ENCODE measurements at regions of chr3 and their contacts with region 1.

Region 1: DNA sequence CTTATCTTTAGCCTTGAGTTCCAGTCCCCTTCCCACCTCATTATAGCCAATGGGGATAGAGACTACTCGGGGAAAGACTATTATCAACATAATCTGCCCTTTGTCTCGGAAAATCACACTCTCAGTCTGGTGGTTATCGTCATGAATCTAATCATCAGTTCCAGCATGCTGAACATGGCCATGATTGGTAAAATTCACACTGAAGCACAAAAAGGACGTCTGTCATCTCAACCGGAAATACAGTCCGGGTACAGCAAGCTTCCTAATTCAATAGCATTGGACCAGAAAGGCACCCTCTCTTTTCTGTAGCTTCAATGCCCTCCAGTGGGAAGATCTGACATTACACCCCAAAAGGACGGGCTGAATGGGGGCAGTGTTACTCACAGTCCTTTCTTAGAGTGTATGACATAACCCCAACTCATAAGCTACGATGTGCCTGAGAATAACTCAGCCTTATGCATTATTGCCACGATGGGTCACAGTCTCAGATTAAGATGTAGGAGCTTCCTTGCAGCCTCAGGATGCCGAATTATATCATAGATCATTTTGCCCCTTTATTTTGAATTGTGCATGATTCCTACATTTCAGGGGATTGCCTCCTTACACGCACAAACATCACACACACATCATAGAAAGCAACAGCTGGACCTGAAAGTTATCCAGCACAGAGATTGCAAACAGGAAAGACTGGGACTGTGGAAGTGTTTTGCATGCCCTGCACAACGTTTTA is 390.4 kb upstream of the LMCD1 start:
- DNase-seq: no peak
- ATAC-seq: peak; percentile 97

Region 2: DNA sequence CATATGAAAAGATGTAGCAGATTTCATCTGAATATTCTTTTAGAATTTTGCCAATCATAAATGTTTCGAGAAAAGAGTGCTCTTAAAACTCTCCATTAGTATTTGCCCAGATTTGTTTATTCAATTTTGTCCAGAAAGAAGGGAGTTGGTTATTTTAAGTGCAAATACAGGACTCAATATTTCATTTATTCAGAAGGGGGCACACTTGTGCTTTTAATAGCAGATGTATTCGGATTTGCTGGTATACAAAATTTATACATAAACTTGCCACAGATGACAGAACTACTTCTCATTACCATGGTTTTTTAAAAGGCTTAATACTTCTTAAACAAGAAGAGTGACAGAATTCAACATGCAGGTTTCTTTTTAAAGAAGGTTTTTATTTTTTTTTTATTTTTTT is 1320.1 kb before region 1 on chr3:
- intact Hi-C with region 1: loop called (anchors 5 kb)
- DNase-seq: no peak
- ATAC-seq: no peak

Region 3: DNA sequence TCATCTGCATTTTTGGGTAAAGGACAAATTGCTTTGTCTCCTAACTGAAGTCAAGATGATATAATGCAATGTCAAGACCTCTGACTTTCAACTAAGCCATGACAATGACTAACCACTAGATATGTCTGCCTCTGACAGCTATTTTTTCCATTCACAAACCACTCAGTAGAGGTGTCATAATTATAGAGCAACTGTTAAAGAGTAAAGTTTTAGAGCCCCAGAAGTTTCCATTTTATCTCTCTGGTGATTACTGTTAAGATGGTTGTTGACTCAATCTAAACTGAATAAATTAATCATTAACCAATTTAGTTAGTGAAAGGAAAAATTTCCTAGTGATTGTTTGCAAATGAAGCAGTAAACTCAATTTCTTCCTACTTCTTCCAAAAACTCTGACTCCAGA is 470.4 kb before region 1 on chr3:
- intact Hi-C with region 1: no loop called
- DNase-seq: no peak
- ATAC-seq: no peak

Region 4: GRCh38 chr3:7800006-7800780 is 311.0 kb before region 1 on chr3:
- intact Hi-C with region 1: loop called (anchors 10 kb)
- DNase-seq: no peak
- ATAC-seq: no peak

Region 5: GRCh38 chr3:8070011-8070410 is 41.2 kb before region 1 on chr3:
- intact Hi-C with region 1: no loop called
- DNase-seq: no peak
- ATAC-seq: no peak